PC-9 (cell line): ENCODE measurements at regions of chr3 and their contacts with region 1.

Region 1: GRCh38 chr3:169998568-169999131 is 32.0 kb downstream of the SEC62 start:
- DNase-seq: peak in 1 of 2 experiments; percentile 80
- H3K4me3 ChIP-seq: no peak overlapping the region
- H3K27ac ChIP-seq: peak overlapping the region; percentile 3; the same call in 1 of the 2 replicates
- H3K4me1 ChIP-seq: 0 out of 2 replicates have a peak, but pooled peaks cover 4% of the 10 kb centered on the region
- H3K27me3 ChIP-seq: no peaks in the 10 kb centered on the region
- CTCF ChIP-seq: no peak

Region 2: DNA sequence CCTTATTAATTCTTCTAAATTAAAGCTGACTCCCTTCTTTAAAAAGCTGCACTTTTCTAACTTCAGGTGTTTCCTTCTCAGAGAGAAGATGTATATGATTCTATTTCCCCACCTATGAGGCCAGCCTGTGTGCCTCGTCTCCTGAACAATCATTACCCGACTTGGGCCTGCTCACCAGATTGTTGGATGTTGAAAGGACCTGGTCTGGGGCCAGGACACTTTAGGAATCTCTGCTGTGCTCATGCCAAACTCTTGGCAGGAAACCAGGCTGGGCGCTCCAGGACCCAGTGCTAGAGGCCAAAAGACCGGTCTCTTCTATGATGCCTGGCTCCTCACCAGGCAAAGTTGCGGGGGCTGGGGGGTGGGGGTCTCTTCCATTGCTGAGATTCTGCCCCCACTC is 112.0 kb before region 1 on chr3:
- CTCF ChIA-PET with region 1: interaction called, 13 read pairs
- POLR2A ChIA-PET with region 1: no interaction called
- intact Hi-C with region 1: no loop called
- DNase-seq: no peak
- H3K4me3 ChIP-seq: no peak overlapping the region
- H3K27ac ChIP-seq: no peak overlapping the region
- H3K4me1 ChIP-seq: no peaks in the 10 kb centered on the region
- H3K27me3 ChIP-seq: no peaks in the 10 kb centered on the region
- CTCF ChIP-seq: no peak

Region 3: GRCh38 chr3:170044795-170045244 is 46.2 kb after region 1 on chr3:
- CTCF ChIA-PET with region 1: no interaction called
- POLR2A ChIA-PET with region 1: no interaction called
- intact Hi-C with region 1: no loop called
- DNase-seq: no peak
- H3K4me3 ChIP-seq: no peak overlapping the region
- H3K27ac ChIP-seq: no peak overlapping the region
- H3K4me1 ChIP-seq: peaks cover 46% of the 10 kb centered on the region
- H3K27me3 ChIP-seq: no peaks in the 10 kb centered on the region
- CTCF ChIP-seq: no peak

Region 4: DNA sequence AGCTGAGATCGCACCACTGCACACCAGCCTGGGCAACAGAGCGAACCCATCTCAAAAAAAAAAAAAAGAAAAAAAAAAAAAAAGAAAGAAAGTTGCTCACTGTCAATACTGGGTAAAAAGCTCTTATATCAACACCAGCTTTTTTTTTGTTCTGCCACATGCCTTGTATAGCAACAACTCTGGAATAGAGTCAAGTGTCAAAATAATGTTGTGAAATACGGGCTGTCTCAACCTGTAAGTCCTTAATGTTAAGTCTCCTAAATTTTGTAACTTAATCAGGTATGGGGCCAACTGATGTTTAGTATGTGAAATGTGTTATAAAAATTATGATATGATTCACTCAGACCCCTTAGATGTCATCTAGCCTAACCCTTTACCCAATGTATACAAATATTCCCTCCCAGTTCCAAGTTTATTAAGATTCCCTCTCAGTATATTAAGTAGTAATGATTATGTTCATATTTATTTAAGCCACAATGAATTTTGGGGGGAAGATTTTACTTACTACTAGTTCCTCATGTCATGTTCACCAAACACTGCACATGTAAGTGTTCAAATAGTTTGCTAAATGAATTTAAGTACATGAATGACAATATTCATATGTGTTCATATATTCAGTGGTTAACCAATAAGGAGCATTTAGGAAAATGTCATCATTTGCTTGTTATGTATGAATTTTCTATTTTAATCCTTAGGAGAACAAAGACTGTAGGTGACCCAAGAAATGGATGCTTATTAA is 91.4 kb after region 1 on chr3:
- CTCF ChIA-PET with region 1: no interaction called
- POLR2A ChIA-PET with region 1: no interaction called
- intact Hi-C with region 1: loop called (anchors 5 kb)
- DNase-seq: no peak
- H3K4me3 ChIP-seq: no peak overlapping the region
- H3K27ac ChIP-seq: no peak overlapping the region
- H3K4me1 ChIP-seq: no peaks in the 10 kb centered on the region
- H3K27me3 ChIP-seq: no peaks in the 10 kb centered on the region
- CTCF ChIP-seq: no peak

Region 5: GRCh38 chr3:170589113-170589512 is 590.5 kb after region 1 on chr3:
- CTCF ChIA-PET with region 1: no interaction called
- POLR2A ChIA-PET with region 1: no interaction called
- intact Hi-C with region 1: no loop called
- DNase-seq: no peak
- H3K4me3 ChIP-seq: no peak overlapping the region
- H3K27ac ChIP-seq: no peak overlapping the region
- H3K4me1 ChIP-seq: 0 out of 2 replicates have a peak, but pooled peaks cover 8% of the 10 kb centered on the region
- H3K27me3 ChIP-seq: 0 out of 2 replicates have a peak, but pooled peaks cover 4% of the 10 kb centered on the region
- CTCF ChIP-seq: no peak